Mammary epithelial cell (primary cell): ENCODE measurements at regions of chr1 and their contacts with region 1.

Region 1: GRCh38 chr1:202056644-202057461 is 46.5 kb downstream of the ELF3 start:
- DNase-seq: peak; percentile 96
- H3K4me3 ChIP-seq: no peak overlapping the region
- H3K27ac ChIP-seq: peak overlapping the region; percentile 92
- H3K4me1 ChIP-seq: peaks cover 19% of the 10 kb centered on the region
- H3K27me3 ChIP-seq: no peaks in the 10 kb centered on the region
- CTCF ChIP-seq: no peak

Region 2: DNA sequence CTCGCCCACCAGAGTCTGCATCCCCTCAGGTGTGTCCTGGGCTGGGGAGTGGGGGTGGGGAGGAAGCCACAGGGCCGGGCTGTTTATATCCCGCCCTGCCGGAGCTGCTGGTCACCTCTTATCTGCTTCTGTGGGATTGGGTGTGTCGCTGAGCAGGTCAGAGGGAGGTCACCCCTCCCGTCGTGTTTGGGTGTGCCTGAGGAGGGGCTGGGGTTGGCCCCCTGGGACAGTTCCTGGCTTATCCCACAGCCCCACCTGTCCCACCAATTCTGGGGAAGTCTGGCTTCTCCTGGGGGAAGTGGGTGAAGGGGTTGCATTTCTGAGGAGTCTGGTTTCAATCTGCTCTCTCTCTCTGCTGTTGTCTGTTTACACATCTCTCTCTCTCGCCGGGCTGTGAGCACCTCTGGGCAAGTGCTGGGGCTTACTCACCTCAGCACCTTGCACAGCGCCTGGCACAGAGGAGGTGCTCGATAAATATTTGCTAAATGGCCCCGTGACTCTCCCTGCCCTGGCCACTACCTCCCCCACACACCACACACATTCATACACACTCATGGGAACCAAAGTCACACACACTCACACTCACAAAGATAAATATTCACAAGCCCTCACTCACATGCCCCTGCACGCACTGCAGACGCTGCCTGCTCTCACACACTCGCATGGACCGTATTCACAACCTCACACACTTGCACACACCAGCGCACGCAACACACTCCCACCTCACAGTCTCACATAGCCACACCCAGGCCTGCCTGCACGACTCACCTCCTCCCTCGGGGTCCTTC is 38.2 kb before region 1 on chr1:
- CTCF ChIA-PET with region 1: no interaction called
- dilution Hi-C with region 1: loop called (anchors 5 kb)
- in situ Hi-C with region 1: no loop called
- intact Hi-C with region 1: no loop called
- DNase-seq: peak; percentile 84
- H3K4me3 ChIP-seq: no peak overlapping the region
- H3K27ac ChIP-seq: peak overlapping the region; percentile 22
- H3K4me1 ChIP-seq: peaks cover 44% of the 10 kb centered on the region
- H3K27me3 ChIP-seq: no peaks in the 10 kb centered on the region
- CTCF ChIP-seq: no peak